OCI-LY7 (cell line): ENCODE measurements at regions of chr2 and their contacts with region 1.

Region 1: GRCh38 chr2:44167940-44168680 is 565 bp upstream of the PPM1B start:
- DNase-seq: peak; percentile 99
- H3K4me3 ChIP-seq: peak overlapping the region; percentile 69
- H3K27ac ChIP-seq: peak overlapping the region; percentile 83
- H3K4me1 ChIP-seq: peaks cover 16% of the 10 kb centered on the region
- CTCF ChIP-seq: no peak

Region 2: DNA sequence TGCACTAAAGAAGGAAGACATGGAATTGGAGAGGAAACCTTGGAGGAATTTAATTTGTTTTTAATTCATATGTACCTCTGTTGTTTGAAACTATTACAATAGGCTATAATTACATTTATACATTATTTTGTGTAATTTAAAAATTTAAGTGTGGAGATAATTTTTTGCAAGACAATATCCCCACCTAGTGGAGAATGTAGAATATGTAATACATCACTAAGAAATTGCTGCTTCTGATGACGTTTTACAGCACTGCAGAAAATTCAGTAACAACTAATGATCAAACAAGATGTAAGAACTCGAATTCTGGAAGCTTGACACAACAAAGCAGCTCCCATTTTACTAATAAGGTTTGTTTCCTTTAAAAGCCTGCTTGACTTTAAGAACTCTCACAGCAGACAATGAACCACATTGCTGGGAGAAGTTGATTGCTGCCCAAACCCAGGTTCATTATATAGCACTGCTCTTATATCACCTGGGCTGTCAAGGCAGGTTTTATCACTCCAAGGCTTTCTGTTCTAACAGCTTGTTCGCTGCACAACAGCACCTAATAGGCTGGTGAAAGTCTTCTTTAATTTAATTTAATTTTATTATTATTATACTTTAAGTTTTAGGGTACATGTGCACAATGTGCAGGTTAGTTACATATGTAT is 625.7 kb before region 1 on chr2:
- CTCF ChIA-PET with region 1: no interaction called
- POLR2A ChIA-PET with region 1: no interaction called
- intact Hi-C with region 1: no loop called
- DNase-seq: peak; percentile 62
- H3K4me3 ChIP-seq: no peak overlapping the region
- H3K27ac ChIP-seq: no peak overlapping the region
- H3K4me1 ChIP-seq: no peaks in the 10 kb centered on the region
- CTCF ChIP-seq: peak; percentile 90

Region 3: GRCh38 chr2:43637030-43637803 is 530.9 kb before region 1 on chr2 and contains the start of gene PLEKHH2:
- CTCF ChIA-PET with region 1: interaction called, 10 read pairs
- POLR2A ChIA-PET with region 1: no interaction called
- intact Hi-C with region 1: no loop called
- DNase-seq: peak; percentile 90
- H3K4me3 ChIP-seq: peak within 1 kb of the TSS; percentile 70
- H3K27ac ChIP-seq: peak within 1 kb of the TSS; percentile 63
- H3K4me1 ChIP-seq: peaks cover 22% of the 10 kb centered on the region
- CTCF ChIP-seq: no peak
- total RNA-seq, gene PLEKHH2: 0.88 and 1.5 TPM in 2 replicates

Region 4: DNA sequence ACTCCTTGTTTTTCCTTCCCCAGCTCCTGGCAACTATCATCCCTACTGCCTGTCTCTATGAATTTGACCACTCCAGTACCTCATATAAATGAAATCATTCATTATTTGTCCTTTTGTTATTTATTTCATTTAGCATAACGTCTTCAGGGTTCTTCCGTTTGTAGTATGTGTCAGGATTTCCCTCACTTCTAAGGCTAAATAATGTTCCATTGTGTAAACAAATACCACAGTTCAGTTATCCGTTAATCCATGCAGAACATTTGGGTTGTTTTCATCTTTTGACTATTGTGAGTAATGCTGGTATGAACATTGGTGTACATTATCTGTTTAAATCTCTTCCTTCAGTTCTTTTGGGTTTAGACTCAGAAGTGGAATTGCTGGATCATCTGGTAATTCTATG is 375.5 kb before region 1 on chr2:
- CTCF ChIA-PET with region 1: no interaction called
- POLR2A ChIA-PET with region 1: no interaction called
- intact Hi-C with region 1: no loop called
- DNase-seq: no peak
- H3K4me3 ChIP-seq: no peak overlapping the region
- H3K27ac ChIP-seq: no peak overlapping the region
- H3K4me1 ChIP-seq: no peaks in the 10 kb centered on the region
- CTCF ChIP-seq: no peak

Region 5: DNA sequence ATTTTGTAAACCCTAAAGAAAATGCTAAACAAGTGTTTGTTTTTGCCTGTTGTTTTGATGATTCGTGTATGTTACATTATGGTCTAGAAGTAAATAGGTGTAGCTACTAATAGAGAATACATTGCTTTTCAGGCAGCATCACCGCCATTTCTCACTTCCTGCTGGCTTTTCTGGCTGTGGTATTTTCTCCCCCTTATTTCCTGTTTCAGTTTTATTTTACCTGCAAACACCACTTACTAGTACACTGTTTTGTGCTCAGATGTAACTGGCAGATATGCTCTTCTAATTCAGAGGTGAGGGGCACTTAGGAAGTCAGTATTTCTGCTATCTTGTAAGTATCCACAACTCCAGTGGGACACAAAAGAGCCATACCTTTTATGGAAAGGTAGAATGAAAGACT is 69.1 kb after region 1 on chr2:
- CTCF ChIA-PET with region 1: no interaction called
- POLR2A ChIA-PET with region 1: no interaction called
- intact Hi-C with region 1: loop called (anchors 2 kb)
- DNase-seq: peak; percentile 48
- H3K4me3 ChIP-seq: peak overlapping the region; percentile 36
- H3K27ac ChIP-seq: peak overlapping the region; percentile 16
- H3K4me1 ChIP-seq: peaks cover 18% of the 10 kb centered on the region
- CTCF ChIP-seq: no peak

Region 6: GRCh38 chr2:44361330-44362206 is 193.5 kb after region 1 on chr2 and contains the starts of genes CAMKMT and PREPL:
- CTCF ChIA-PET with region 1: no interaction called
- POLR2A ChIA-PET with region 1: interaction called, 5 read pairs
- intact Hi-C with region 1: loop called (anchors 2 kb)
- DNase-seq: peak; percentile 97
- H3K4me3 ChIP-seq: peak within 1 kb of the TSS; percentile 82
- H3K27ac ChIP-seq: peak within 1 kb of the TSS; percentile 64
- H3K4me1 ChIP-seq: peaks cover 13% of the 10 kb centered on the region
- CTCF ChIP-seq: no peak
- total RNA-seq, gene CAMKMT: 25.1 and 27.4 TPM in 2 replicates
- total RNA-seq, gene PREPL: 27.5 and 28.2 TPM in 2 replicates